ENCODE measurements at regions of chr13 and their contacts with region 1.

Region 1: DNA sequence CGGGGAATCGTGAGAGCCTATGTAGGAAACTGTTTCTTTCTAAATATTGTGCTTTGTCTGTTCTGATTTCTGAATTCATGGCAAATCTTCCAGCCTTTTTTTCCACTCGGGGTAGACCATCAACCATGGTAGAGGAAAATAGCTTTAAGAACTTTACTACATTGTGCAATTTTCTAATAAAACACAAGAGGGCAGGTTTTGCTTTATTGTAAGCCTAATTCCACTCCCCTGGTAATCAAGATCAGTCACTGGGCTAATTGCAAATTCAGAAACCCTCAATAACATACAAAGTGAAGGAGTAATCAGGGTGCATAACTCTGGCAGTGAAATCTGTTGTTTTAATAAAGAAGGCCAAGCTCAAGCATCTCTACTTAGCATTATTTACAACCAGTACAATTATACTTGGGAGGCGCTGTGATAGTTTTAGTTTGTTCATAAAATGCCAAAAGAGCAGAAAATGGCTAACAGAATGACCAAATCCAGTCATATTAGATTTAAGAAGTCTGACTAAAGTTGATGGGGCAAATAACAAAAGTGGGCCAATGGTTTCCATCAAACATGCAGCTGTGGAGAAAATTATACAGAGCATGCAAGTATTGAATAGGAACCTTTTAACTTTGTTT is 43.8 kb downstream of the DCT start:
- DNase-seq: no peak
- ATAC-seq: peak; percentile 45 to 71
- H3K4me3 ChIP-seq: no peak overlapping the region
- H3K27ac ChIP-seq: no peak overlapping the region
- H3K4me1 ChIP-seq: no peaks in the 10 kb centered on the region
- H3K27me3 ChIP-seq: no peaks in the 10 kb centered on the region

Region 2: GRCh38 chr13:94128430-94128829 is 307.3 kb before region 1 on chr13:
- intact Hi-C with region 1: no loop called
- DNase-seq: peak; percentile 20 to 58 (median 40)
- ATAC-seq: peak; percentile 96 to 98
- H3K4me3 ChIP-seq: no peak overlapping the region
- H3K27ac ChIP-seq: peak overlapping the region; percentile 68
- H3K4me1 ChIP-seq: no peaks in the 10 kb centered on the region
- H3K27me3 ChIP-seq: no peaks in the 10 kb centered on the region

Region 3: DNA sequence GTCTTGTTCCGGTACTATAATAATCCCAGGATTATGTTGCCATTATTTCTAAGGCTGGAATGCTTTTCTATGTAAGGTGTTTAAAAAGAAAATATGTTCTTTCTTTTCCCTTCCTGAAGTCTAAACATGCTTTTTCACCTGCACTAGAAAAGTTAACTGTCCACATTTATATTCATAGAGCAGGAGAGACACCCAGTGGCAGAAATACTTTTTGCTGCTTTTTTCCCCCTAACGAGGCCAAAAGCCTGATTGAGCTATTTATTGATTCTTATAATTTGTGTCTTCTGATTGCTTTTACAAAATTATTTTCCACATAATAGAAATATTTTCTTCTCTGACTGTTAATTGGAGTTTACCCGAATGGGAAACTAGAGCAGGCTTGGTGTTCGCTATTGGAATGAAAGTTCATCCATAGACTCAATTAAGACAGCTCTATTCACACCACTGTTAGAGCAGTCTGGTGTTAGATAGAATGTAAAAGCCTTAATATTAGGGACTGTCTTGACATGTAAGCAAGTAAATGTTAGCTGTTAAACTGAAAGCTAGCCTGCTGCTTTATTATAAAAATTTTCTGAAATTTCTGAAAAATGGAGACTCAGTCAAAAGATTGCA is 181.8 kb after region 1 on chr13:
- intact Hi-C with region 1: loop called (anchors 1 to 5 kb)
- DNase-seq: no peak
- ATAC-seq: no peak
- H3K4me3 ChIP-seq: no peak overlapping the region
- H3K27ac ChIP-seq: no peak overlapping the region
- H3K4me1 ChIP-seq: no peaks in the 10 kb centered on the region
- H3K27me3 ChIP-seq: no peaks in the 10 kb centered on the region